CD14-positive monocyte (primary cell): ENCODE measurements at regions of chr4 and their contacts with region 1.

Region 1: GRCh38 chr4:52019936-52020657 is at the start of gene LRRC66:
- DNase-seq: peak in 1 of 3 donors; percentile 12
- H3K4me3 ChIP-seq: peak within 1 kb of the TSS in 1 of 3 experiments; percentile 23
- H3K4me3 Mint-ChIP-seq: no peak within 1 kb of the TSS
- H3K27ac ChIP-seq: peak within 1 kb of the TSS; percentile 49 to 81
- H3K27ac Mint-ChIP-seq: peak within 1 kb of the TSS; percentile 45 to 83 (median 65)
- H3K4me1 ChIP-seq: peaks cover 13 to 21% of the 10 kb centered on the region in 2 donors
- H3K4me1 Mint-ChIP-seq: peaks cover 20% of the 10 kb centered on the region
- H3K27me3 ChIP-seq: no peaks in the 10 kb centered on the region
- H3K27me3 Mint-ChIP-seq: no peaks in the 10 kb centered on the region
- CTCF ChIP-seq: no peak
- polyA plus RNA-seq, gene LRRC66: 0.03 TPM in 1 of 3 donors, not detected in the others

Region 2: GRCh38 chr4:51885363-51885762 is 134.7 kb before region 1 on chr4:
- intact Hi-C with region 1: loop called in 1 of 2 experiments (anchors 5 kb)
- DNase-seq: peak in 1 of 3 donors; percentile 10
- H3K4me3 ChIP-seq: no peak overlapping the region
- H3K4me3 Mint-ChIP-seq: no peak overlapping the region
- H3K27ac ChIP-seq: no peak overlapping the region
- H3K27ac Mint-ChIP-seq: peak overlapping the region in 1 of 7 donors; percentile 9
- H3K4me1 ChIP-seq: no peaks in the 10 kb centered on the region
- H3K4me1 Mint-ChIP-seq: no peaks in the 10 kb centered on the region
- H3K27me3 ChIP-seq: no peaks in the 10 kb centered on the region
- H3K27me3 Mint-ChIP-seq: peaks cover 0 to under 1% (median 0%) of the 10 kb centered on the region in 3 donors
- CTCF ChIP-seq: peak; percentile 58